Activated CD4-positive, alpha-beta T cell treated with anti-CD3 and anti-CD28 coated beads for 36 hours (primary cell): ENCODE measurements at regions of chr2 and their contacts with region 1.

Region 1: GRCh38 chr2:96891491-96892333 is 21.8 kb upstream of the SEMA4C start:
- DNase-seq: no peak
- ATAC-seq: no peak
- H3K4me3 Mint-ChIP-seq: no peak overlapping the region
- H3K27ac Mint-ChIP-seq: peak overlapping the region; percentile 0
- H3K4me1 Mint-ChIP-seq: peaks cover 57% of the 10 kb centered on the region
- H3K27me3 Mint-ChIP-seq: no peaks in the 10 kb centered on the region

Region 2: GRCh38 chr2:96934831-96935540 is 43.3 kb after region 1 on chr2:
- CTCF ChIA-PET with region 1: no interaction called
- POLR2A ChIA-PET with region 1: no interaction called
- intact Hi-C with region 1: loop called in 1 of 2 experiments (anchors 5 kb)
- DNase-seq: no peak
- ATAC-seq: no peak
- H3K4me3 Mint-ChIP-seq: no peak overlapping the region
- H3K27ac Mint-ChIP-seq: no peak overlapping the region
- H3K4me1 Mint-ChIP-seq: peaks cover 1% of the 10 kb centered on the region
- H3K27me3 Mint-ChIP-seq: no peaks in the 10 kb centered on the region